Dendritic cell treated with granulocyte-macrophage colony-stimulating factor and Interleukin-4, amounts not matched to agents 40 ng/mL and 50 ng/mL, for 4 days (primary cell): ENCODE measurements at regions of chr3 and their contacts with region 1.

Region 1: DNA sequence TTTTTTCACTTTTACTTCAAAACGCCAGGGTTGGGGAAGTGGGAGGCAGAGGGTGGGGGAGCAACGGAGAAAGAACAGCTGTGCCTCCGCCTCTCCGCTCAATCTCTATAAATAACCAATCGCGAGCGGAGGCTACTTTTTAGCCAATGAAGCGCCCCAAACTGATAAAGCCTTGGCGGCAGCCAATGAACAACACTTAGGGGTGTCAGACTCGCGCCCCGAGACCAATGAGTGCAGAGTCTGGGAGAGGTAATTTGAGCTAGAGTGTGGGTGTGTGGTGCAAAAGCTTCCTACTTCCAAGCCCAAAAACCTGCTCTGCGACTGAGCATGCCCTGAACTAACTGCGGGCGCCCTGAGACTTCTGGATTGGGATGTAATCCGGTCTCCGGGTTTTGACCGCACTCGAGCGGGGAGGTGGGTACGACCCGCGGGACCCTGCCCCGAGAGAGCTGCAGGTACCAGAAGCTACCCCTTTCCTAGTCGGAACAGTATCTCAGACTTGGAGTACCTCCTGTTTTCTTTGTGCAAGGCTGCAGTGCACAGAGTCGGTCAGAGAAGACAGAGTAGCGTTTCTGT is 800 bp upstream of the RAP2B start:
- H3K4me3 Mint-ChIP-seq: peak overlapping the region; percentile 88
- H3K27ac Mint-ChIP-seq: peak overlapping the region; percentile 100
- H3K4me1 Mint-ChIP-seq: peaks cover 24% of the 10 kb centered on the region
- H3K27me3 Mint-ChIP-seq: no peaks in the 10 kb centered on the region

Region 2: GRCh38 chr3:152474585-152474984 is 686.6 kb before region 1 on chr3:
- intact Hi-C with region 1: no loop called
- H3K4me3 Mint-ChIP-seq: no peak overlapping the region
- H3K27ac Mint-ChIP-seq: no peak overlapping the region
- H3K4me1 Mint-ChIP-seq: peaks cover 9% of the 10 kb centered on the region
- H3K27me3 Mint-ChIP-seq: peaks cover 3% of the 10 kb centered on the region

Region 3: GRCh38 chr3:152508705-152509104 is 652.5 kb before region 1 on chr3:
- intact Hi-C with region 1: no loop called
- H3K4me3 Mint-ChIP-seq: no peak overlapping the region
- H3K27ac Mint-ChIP-seq: no peak overlapping the region
- H3K4me1 Mint-ChIP-seq: peaks cover 5% of the 10 kb centered on the region
- H3K27me3 Mint-ChIP-seq: no peaks in the 10 kb centered on the region

Region 4: GRCh38 chr3:152706991-152707713 is 454.1 kb before region 1 on chr3:
- intact Hi-C with region 1: no loop called
- H3K4me3 Mint-ChIP-seq: peak overlapping the region; percentile 28
- H3K27ac Mint-ChIP-seq: no peak overlapping the region
- H3K4me1 Mint-ChIP-seq: no peaks in the 10 kb centered on the region
- H3K27me3 Mint-ChIP-seq: no peaks in the 10 kb centered on the region

Region 5: GRCh38 chr3:153043729-153044328 is 117.4 kb before region 1 on chr3:
- intact Hi-C with region 1: loop called (anchors 1 kb)
- H3K4me3 Mint-ChIP-seq: peak overlapping the region; percentile 59
- H3K27ac Mint-ChIP-seq: peak overlapping the region; percentile 82
- H3K4me1 Mint-ChIP-seq: peaks cover 16% of the 10 kb centered on the region
- H3K27me3 Mint-ChIP-seq: no peaks in the 10 kb centered on the region

Region 6: GRCh38 chr3:153144779-153145178 is 16.4 kb before region 1 on chr3:
- intact Hi-C with region 1: loop called (anchors 1 kb)
- H3K4me3 Mint-ChIP-seq: no peak overlapping the region
- H3K27ac Mint-ChIP-seq: peak overlapping the region; percentile 72
- H3K4me1 Mint-ChIP-seq: peaks cover 20% of the 10 kb centered on the region
- H3K27me3 Mint-ChIP-seq: no peaks in the 10 kb centered on the region

Region 7: GRCh38 chr3:153291056-153291685 is 129.9 kb after region 1 on chr3:
- intact Hi-C with region 1: loop called (anchors 2 kb)
- H3K4me3 Mint-ChIP-seq: no peak overlapping the region
- H3K27ac Mint-ChIP-seq: peak overlapping the region; percentile 57
- H3K4me1 Mint-ChIP-seq: peaks cover 39% of the 10 kb centered on the region
- H3K27me3 Mint-ChIP-seq: no peaks in the 10 kb centered on the region

Region 8: GRCh38 chr3:153768561-153769469 is 607.6 kb after region 1 on chr3:
- intact Hi-C with region 1: loop called (anchors 5 kb)
- H3K4me3 Mint-ChIP-seq: no peak overlapping the region
- H3K27ac Mint-ChIP-seq: no peak overlapping the region
- H3K4me1 Mint-ChIP-seq: peaks cover 17% of the 10 kb centered on the region
- H3K27me3 Mint-ChIP-seq: peaks cover 7% of the 10 kb centered on the region